MCF 10A (cell line): ENCODE measurements at regions of chr3 and their contacts with region 1.

Region 1: GRCh38 chr3:196711838-196712513 is at the starts of genes CEP19 and PIGX:
- DNase-seq: peak; percentile 79
- H3K4me3 Mint-ChIP-seq: peak within 1 kb of the TSS; percentile 93
- H3K27ac Mint-ChIP-seq: peak within 1 kb of the TSS; percentile 91
- H3K4me1 Mint-ChIP-seq: peaks cover 5% of the 10 kb centered on the region
- H3K27me3 Mint-ChIP-seq: no peaks in the 10 kb centered on the region
- CTCF ChIP-seq: no peak
- total RNA-seq, gene CEP19: 1.8 and 3.2 TPM in 2 replicates
- total RNA-seq, gene PIGX: 20.8 and 23.2 TPM in 2 replicates

Region 2: GRCh38 chr3:196609343-196609775 is 102.6 kb before region 1 on chr3:
- CTCF ChIA-PET with region 1: interaction called, 14 read pairs
- POLR2A ChIA-PET with region 1: interaction called, 3 read pairs
- intact Hi-C with region 1: no loop called
- DNase-seq: peak; percentile 89
- H3K4me3 Mint-ChIP-seq: no peak overlapping the region
- H3K27ac Mint-ChIP-seq: no peak overlapping the region
- H3K4me1 Mint-ChIP-seq: peaks cover 9% of the 10 kb centered on the region
- H3K27me3 Mint-ChIP-seq: no peaks in the 10 kb centered on the region
- CTCF ChIP-seq: peak; percentile 93

Region 3: DNA sequence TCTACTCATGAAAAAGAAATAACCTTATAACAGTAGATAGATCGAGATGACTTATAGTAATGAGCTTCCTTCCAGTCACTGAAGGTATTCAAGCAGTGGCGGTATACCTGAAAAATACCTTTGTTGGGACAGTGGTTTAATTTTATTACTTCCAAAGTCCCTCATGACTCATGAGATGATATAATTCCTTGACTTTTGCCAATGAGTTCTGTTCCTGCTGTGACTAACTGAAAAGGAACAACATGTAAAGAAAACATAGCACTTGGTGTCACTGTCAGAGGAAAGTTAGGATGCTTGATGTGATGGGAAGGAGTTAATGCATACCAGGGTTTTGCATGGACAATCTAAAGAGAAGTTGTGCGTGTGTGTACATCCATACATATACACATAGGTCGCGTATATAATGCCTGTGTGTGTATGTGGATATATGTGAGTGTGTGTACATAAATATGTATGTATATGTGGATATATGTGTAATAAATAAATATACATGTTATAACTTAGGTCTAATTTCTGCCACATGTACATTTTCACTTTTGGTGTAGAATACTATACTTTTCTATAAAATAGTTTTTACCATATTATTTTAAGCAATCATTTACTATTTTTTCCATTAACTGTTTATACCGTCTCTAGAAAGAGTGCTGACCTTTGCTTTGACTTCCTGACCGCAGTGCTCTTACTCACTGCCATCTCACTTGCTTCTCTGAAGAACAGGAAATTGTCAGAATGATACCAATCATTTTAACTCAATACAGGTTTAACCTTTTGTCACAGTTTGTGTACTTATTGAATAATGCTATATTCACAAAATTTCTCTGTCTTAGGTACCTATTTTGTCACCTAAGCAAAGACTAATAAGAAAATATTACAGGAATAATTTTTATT is 15.1 kb after region 1 on chr3:
- CTCF ChIA-PET with region 1: interaction called, 3 read pairs
- POLR2A ChIA-PET with region 1: interaction called, 10 read pairs
- intact Hi-C with region 1: no loop called
- DNase-seq: peak; percentile 39
- H3K4me3 Mint-ChIP-seq: no peak overlapping the region
- H3K27ac Mint-ChIP-seq: no peak overlapping the region
- H3K4me1 Mint-ChIP-seq: peaks cover 11% of the 10 kb centered on the region
- H3K27me3 Mint-ChIP-seq: no peaks in the 10 kb centered on the region
- CTCF ChIP-seq: no peak